ENCODE measurements at regions of chr11 and their contacts with region 1.

Region 1: DNA sequence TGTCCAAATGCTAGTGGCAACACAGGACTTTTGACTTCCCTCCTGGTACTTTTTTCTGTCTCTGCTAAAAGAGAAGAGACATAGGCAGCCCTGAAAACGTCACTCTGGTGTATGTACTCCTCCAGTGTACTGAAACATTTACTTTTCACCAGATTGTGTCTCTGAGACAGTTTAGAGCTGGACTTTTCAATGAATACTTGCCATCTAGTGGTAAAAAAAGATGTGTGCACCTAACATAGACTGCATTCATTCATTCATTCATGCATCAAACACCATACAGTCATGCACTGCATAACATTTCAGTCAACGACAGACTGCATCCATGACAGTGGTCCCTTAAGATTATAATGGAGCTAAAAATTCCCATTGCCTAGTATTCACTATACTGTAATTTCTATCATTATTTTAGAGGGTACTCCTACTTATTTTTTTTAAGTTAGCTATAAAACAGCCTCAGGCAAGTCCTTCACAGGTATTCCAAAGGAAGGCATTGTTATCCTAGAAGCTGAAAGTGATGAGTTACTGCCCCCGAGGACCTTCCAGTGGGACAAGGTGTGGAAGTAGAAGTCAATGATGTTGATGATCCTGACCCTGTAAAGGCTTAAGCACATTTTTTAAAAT is 186.2 kb downstream of the SPON1 start:
- DNase-seq: no peak
- H3K4me3 Mint-ChIP-seq: no peak overlapping the region
- H3K27ac Mint-ChIP-seq: no peak overlapping the region
- H3K4me1 Mint-ChIP-seq: peaks cover 8% of the 10 kb centered on the region
- H3K27me3 Mint-ChIP-seq: no peaks in the 10 kb centered on the region

Region 2: DNA sequence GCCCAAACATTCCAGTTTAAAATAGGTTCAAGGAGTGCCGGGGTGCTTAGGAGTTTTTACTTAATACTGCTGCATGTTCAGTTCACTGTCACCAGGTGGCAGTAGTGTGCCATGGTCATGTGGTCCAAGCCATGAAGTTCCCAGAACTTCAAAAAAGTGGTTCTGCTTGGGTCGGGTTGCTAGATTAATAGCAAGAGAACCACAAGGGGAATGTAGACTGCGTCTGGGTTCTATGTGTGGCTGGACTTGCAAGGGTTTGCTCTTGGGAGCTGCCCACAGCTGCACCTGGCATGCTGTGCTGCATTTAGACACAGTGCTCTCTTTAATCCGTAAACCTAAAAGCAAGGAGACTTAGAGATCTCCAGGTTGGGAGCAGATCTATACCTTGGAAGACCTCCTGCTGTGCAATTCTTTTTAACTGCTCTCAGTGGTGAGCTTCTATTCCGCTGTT is 192.8 kb before region 1 on chr11:
- CTCF ChIA-PET with region 1: interaction called, 63 read pairs
- POLR2A ChIA-PET with region 1: no interaction called
- intact Hi-C with region 1: loop called (anchors 1 kb)
- DNase-seq: peak; percentile 54
- H3K4me3 Mint-ChIP-seq: no peak overlapping the region
- H3K27ac Mint-ChIP-seq: no peak overlapping the region
- H3K4me1 Mint-ChIP-seq: no peaks in the 10 kb centered on the region
- H3K27me3 Mint-ChIP-seq: peaks cover 3% of the 10 kb centered on the region

Region 3: DNA sequence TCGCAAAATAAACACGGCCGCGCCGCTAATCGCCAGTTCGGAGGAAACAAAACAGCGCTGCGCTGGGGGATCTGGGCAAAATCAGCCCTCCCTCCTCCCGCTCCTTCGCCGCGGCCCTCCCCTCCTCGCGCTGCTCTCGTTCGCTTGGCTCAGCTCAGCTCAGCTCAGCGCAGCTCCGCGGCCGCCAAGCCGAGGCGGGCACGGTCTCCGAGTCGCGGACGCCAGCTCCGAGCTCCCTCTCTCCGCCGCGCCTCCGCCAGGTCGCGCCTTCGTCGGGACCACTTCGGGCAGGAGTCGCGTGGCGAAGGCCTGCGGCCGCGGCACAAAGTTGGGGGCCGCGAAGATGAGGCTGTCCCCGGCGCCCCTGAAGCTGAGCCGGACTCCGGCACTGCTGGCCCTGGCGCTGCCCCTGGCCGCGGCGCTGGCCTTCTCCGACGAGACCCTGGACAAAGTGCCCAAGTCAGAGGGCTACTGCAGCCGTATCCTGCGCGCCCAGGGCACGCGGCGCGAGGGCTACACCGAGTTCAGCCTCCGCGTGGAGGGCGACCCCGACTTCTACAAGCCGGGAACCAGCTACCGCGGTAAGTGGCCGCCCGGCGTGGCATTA is 186.1 kb before region 1 on chr11 and contains the start of gene SPON1:
- CTCF ChIA-PET with region 1: interaction called, 63 read pairs
- POLR2A ChIA-PET with region 1: no interaction called
- intact Hi-C with region 1: no loop called
- DNase-seq: peak; percentile 64
- H3K4me3 Mint-ChIP-seq: peak within 1 kb of the TSS; percentile 65
- H3K27ac Mint-ChIP-seq: no peak within 1 kb of the TSS
- H3K4me1 Mint-ChIP-seq: peaks cover 10% of the 10 kb centered on the region
- H3K27me3 Mint-ChIP-seq: peaks cover 32% of the 10 kb centered on the region
- total RNA-seq, gene SPON1: 0.22 to 0.31 TPM

Region 4: GRCh38 chr11:13970986-13971385 is 177.8 kb before region 1 on chr11:
- CTCF ChIA-PET with region 1: interaction called, 24 read pairs
- POLR2A ChIA-PET with region 1: no interaction called
- intact Hi-C with region 1: loop called (anchors 1 kb)
- DNase-seq: peak; percentile 33
- H3K4me3 Mint-ChIP-seq: no peak overlapping the region
- H3K27ac Mint-ChIP-seq: no peak overlapping the region
- H3K4me1 Mint-ChIP-seq: peaks cover 18% of the 10 kb centered on the region
- H3K27me3 Mint-ChIP-seq: peaks cover under 1% of the 10 kb centered on the region

Region 5: GRCh38 chr11:14075118-14076078 is 73.4 kb before region 1 on chr11:
- CTCF ChIA-PET with region 1: interaction called, 12 read pairs
- POLR2A ChIA-PET with region 1: no interaction called
- intact Hi-C with region 1: loop called (anchors 1 kb)
- DNase-seq: peak; percentile 79
- H3K4me3 Mint-ChIP-seq: peak overlapping the region; percentile 2
- H3K27ac Mint-ChIP-seq: peak overlapping the region; percentile 34
- H3K4me1 Mint-ChIP-seq: peaks cover 46% of the 10 kb centered on the region
- H3K27me3 Mint-ChIP-seq: no peaks in the 10 kb centered on the region

Region 6: DNA sequence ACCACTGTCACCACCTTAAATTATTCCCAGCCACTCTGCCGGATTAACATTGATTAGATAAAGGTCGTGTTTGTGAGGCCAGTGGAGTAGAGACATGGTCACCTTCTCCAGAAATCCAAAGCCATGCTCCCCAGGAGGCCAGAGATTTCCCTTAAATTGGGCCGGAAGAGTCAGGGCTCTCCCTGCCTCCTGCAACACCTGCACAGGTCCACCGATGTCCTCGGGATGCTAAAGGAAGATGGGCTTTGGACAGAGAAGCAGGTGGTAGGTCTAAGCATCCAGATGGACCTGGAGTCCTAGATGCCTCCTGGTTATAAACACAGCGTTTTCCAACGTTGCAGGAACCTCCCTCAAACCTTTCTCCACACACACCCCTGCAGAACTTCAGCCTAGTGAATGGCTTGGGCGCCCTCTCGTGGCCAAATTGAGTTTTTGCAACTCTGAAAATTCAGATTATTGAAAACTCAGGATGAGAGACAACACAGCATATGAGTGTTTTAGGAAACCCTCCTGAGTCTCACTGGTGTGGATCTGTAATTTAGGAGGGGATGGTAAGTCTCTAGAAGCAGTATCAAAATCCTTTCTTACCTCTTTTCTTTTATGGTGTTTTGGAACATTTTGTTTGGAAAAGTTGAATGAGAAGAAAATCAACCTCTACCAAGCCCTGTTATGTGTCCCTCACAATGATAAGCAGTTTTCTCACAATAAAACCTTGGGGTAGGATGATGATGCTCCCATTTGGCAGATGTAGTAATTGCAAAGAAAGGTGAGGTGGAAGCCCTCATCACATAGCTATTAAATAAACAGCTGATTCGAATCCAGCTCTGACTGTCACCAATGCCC is 100.6 kb after region 1 on chr11:
- CTCF ChIA-PET with region 1: interaction called, 6 read pairs
- POLR2A ChIA-PET with region 1: no interaction called
- intact Hi-C with region 1: loop called (anchors 5 kb)
- DNase-seq: peak; percentile 78
- H3K4me3 Mint-ChIP-seq: no peak overlapping the region
- H3K27ac Mint-ChIP-seq: no peak overlapping the region
- H3K4me1 Mint-ChIP-seq: peaks cover 19% of the 10 kb centered on the region
- H3K27me3 Mint-ChIP-seq: no peaks in the 10 kb centered on the region